Activated T-helper 1 cell treated with anti-CD3 and anti-CD28 coated beads, Interleukin-12 subunit alpha, Interleukin-12 subunit beta, Interleukin-2, Interleukin-4 antibody, amounts not matched to agents 30 ng/mL and 10 ng/mL and 1 ng/mL, durations not matched to agents 14 hours and 24 hours and 36 hours (primary cell): ENCODE measurements at regions of chr3 and their contacts with region 1.

Region 1: DNA sequence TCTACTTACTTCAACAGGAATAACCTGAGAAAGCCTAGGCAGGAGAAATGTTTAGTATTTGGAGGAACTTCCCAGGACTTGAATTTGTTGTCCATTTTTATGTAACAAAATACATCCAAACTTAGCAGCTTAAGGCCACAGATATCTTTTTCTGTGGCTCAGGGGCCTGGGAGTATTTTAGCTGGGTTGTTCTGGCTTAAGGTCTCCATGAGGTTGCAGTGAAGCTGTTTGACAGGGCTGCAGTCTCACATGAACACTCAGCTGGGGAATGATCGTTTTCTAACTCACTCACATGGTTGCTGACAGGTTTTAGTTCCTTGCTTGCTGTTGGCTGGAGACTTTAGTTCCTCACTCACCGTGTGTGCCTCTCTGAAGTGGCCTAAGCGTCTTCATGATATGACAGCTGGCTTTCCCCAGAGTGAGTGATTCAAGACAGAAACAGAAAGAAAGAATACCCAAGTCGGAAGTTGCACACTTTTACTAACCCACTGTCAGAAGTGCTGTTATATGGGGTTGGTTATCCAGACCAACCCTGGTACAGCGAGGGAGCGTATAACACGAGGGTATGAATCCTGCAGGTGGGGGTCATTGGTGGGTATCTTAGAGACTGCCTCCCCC is 229.7 kb upstream of the TBL1XR1 start:
- DNase-seq: peak; percentile 65
- H3K4me3 Mint-ChIP-seq: peak overlapping the region; percentile 20
- H3K27ac Mint-ChIP-seq: peak overlapping the region; percentile 59
- H3K4me1 Mint-ChIP-seq: peaks cover 29% of the 10 kb centered on the region
- H3K27me3 Mint-ChIP-seq: peaks cover 16% of the 10 kb centered on the region

Region 2: DNA sequence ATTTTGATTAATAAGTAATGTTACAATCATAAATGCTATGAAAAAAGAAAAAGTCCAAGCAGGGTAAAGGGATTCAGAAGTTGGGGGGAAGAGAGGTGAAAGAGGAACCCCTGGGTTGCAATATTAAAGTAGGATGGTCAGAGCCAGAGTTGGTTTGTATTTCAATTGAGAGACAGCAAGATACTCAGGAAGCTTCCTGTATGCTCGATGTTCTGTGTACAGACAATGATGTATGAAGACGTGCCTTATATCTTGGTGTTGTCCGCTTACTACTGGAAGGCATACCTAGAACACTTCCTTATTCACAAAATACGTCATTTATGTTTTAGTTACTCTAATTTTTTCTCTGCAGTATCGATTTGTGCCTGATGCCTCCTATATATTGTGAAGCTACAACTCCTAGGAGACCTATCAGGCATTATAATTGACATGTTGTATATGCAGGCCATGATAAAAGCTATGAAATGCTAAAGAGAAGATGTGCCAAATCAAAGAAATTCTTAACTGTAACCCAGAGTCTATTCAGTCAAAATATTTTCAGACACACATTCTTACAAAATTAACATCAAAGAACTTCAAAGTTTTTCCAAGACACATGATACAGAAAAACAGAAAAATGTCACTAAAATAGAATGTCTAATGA is 317.2 kb before region 1 on chr3:
- intact Hi-C with region 1: no loop called
- DNase-seq: no peak
- H3K4me3 Mint-ChIP-seq: no peak overlapping the region
- H3K27ac Mint-ChIP-seq: peak overlapping the region; percentile 64
- H3K4me1 Mint-ChIP-seq: peaks cover 60% of the 10 kb centered on the region
- H3K27me3 Mint-ChIP-seq: no peaks in the 10 kb centered on the region

Region 3: GRCh38 chr3:177144923-177145780 is 281.8 kb before region 1 on chr3:
- intact Hi-C with region 1: loop called (anchors 2 kb)
- DNase-seq: peak; percentile 35
- H3K4me3 Mint-ChIP-seq: peak overlapping the region; percentile 61
- H3K27ac Mint-ChIP-seq: peak overlapping the region; percentile 93
- H3K4me1 Mint-ChIP-seq: peaks cover 69% of the 10 kb centered on the region
- H3K27me3 Mint-ChIP-seq: no peaks in the 10 kb centered on the region

Region 4: GRCh38 chr3:177337541-177338331 is 89.3 kb before region 1 on chr3:
- intact Hi-C with region 1: loop called (anchors 1 kb)
- DNase-seq: peak; percentile 66
- H3K4me3 Mint-ChIP-seq: peak overlapping the region; percentile 51
- H3K27ac Mint-ChIP-seq: peak overlapping the region; percentile 95
- H3K4me1 Mint-ChIP-seq: peaks cover 65% of the 10 kb centered on the region
- H3K27me3 Mint-ChIP-seq: peaks cover 8% of the 10 kb centered on the region

Region 5: DNA sequence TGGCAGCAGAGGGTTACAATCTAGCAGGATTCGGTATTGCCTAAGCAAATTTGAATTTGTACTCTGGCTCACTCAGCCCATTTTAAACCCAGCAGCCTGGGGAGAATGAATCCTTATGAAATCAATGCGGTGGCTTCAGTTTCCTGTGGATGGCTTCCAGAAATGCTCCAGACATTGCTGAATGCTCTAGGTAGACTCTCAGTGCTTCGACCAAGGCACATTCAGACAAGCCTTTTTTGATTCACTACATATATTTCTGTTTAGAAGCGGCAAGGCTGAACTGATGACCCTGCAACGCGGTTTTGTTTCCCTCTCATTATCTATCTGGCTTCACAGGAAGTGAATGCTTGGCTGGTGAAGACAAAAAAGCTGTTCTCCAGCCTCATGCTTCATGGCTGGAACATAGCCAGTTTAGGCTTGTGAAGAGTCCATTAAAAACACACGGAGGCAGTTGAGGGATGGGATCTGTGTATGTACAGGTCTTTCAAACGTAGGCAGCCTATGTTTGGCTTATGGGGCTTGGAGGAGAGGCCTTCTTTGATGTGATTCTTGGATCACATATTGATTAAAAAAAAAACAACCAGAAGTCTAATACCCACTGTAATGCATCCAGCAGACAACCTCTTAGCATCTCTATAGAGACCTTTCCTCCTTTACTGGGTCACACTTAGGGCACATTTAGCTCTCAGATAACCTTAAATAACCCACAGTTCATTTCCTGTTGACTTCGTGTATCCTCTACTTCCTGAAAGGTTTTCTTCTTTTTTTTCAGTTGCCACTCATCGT is 170.5 kb after region 1 on chr3:
- intact Hi-C with region 1: loop called (anchors 2 kb)
- DNase-seq: no peak
- H3K4me3 Mint-ChIP-seq: peak overlapping the region; percentile 71
- H3K27ac Mint-ChIP-seq: peak overlapping the region; percentile 96
- H3K4me1 Mint-ChIP-seq: peaks cover 61% of the 10 kb centered on the region
- H3K27me3 Mint-ChIP-seq: peaks cover 2% of the 10 kb centered on the region

Region 6: GRCh38 chr3:179071550-179072397 is 1644.8 kb after region 1 on chr3 and contains the start of gene ZMAT3:
- intact Hi-C with region 1: loop called (anchors 10 kb)
- DNase-seq: peak; percentile 84
- H3K4me3 Mint-ChIP-seq: peak within 1 kb of the TSS; percentile 98
- H3K27ac Mint-ChIP-seq: peak within 1 kb of the TSS; percentile 95
- H3K4me1 Mint-ChIP-seq: peaks cover 43% of the 10 kb centered on the region
- H3K27me3 Mint-ChIP-seq: peaks cover 3% of the 10 kb centered on the region
- total RNA-seq, gene ZMAT3: 16.9 and 17.3 TPM in 2 replicates